Dendritic cell treated with granulocyte-macrophage colony-stimulating factor and Interleukin-4, amounts not matched to agents 40 ng/mL and 50 ng/mL, for 4 days (primary cell): ENCODE measurements at regions of chr6 and their contacts with region 1.

Region 1: DNA sequence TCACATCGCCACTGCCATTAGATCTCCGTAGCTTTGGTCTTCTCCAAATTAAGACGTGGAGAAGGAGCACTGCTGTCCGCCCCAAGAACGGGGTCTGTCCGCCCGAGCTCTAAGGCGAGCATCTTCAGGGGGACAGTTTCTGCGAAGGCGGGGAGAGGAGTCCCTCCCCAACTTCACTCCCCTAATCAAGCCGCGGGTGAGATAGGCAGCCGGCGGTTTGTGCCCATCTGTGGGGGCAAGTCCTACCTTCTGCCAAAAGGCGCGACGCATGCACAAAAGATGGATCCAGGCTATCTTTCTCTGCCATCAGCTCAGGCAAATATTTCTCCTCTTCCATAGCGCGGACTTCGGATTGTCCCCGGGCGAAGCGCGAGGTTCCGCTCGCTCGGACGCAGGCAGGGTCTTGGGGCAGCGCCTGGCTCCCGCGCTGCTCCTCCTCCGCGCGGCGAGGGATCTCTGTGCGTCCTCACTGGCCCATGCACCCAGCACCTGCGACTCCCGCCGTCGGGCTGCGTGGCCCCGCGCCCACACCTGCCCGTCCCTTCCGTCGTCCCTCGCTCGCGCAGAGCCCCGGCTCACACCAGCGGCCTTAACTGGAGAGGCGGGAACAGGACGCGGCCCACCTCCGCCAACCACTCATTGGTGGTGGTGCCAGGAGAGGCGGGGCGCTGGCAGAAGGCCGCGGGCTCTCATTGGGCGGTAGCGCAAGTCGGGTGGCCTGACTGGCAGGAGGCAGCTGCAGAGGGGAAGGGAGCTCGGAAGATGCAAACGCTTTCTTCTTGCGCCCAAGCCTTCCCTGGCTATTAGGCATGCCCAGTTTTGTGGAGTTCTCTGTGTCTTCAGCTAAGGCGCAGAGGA is at the start of gene KHDRBS2:
- H3K4me3 Mint-ChIP-seq: peak within 1 kb of the TSS; percentile 81
- H3K27ac Mint-ChIP-seq: peak within 1 kb of the TSS; percentile 3
- H3K4me1 Mint-ChIP-seq: peaks cover 19% of the 10 kb centered on the region
- H3K27me3 Mint-ChIP-seq: peaks cover 27% of the 10 kb centered on the region

Region 2: DNA sequence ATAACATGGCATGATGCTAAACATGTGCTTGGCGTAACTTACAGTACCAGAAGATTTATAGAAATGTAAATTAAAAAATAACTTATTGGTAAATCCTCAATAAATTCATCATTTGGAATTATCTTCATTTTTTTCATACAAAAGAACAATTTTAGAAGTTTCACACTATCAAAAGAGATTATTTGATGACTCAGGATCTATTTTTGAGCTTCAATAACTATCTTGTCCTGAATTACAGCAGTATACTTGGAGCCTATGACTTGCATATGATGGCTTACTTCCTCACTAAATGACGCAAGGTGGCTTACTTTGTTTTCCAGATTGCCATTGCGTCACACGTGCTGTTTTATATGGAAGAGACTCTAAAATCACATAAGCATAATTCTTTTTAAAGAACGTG is 49.1 kb before region 1 on chr6:
- intact Hi-C with region 1: no loop called
- H3K4me3 Mint-ChIP-seq: no peak overlapping the region
- H3K27ac Mint-ChIP-seq: no peak overlapping the region
- H3K4me1 Mint-ChIP-seq: no peaks in the 10 kb centered on the region
- H3K27me3 Mint-ChIP-seq: no peaks in the 10 kb centered on the region

Region 3: DNA sequence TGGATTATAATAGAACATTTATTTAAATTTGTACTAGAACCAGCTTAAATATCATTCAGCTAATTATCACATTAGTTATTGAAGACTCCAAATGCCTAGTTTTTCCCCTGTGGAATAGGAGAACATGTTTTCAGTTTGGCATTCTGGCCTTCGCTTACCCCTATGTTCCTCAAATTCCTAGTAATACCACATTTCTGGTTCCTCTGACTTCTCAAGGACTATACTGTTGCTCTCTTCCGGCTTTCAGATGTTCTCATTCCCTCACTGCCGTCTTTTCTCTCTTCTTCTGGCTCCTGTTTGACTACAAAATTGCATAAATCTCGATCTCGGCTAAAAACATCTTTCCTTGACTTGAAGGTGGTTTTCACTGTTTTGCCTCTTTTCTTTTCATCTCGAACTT is 72.0 kb after region 1 on chr6:
- intact Hi-C with region 1: loop called (anchors 5 kb)
- H3K4me3 Mint-ChIP-seq: peak overlapping the region; percentile 67
- H3K27ac Mint-ChIP-seq: peak overlapping the region; percentile 83
- H3K4me1 Mint-ChIP-seq: peaks cover 11% of the 10 kb centered on the region
- H3K27me3 Mint-ChIP-seq: no peaks in the 10 kb centered on the region